ENCODE measurements at regions of chr4 and their contacts with region 1.

Region 1: DNA sequence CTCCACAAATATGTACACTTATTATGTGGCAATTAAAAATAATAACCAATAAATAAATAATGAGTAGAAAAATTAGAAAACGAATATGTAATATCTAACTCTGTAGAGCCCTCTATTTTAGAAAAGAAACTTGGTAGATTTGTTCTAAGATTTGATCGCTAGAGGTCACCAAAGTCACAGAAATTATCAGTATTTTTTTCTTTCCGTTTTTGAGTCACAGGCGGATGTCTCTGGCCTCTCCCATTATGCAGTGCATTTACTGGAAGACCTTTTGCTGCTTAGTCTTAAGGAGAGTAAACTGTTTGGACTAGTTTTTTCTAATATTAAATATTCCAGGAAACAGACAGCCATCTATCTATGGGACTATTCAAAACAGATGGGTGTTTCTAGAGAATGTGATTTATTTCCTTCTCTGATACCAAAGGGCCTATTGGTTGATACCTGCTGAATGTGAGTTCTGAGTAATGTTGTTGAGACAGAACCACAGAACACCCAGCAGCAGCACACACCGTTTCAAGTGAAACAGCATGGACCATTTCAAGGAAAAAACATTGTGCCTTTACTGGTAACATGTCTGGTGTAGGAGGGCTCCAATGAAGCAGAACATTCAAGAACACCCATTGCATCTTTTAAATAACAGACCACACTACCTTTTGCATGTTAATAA is 34.0 kb upstream of the GYPA start:
- DNase-seq: no peak

Region 2: DNA sequence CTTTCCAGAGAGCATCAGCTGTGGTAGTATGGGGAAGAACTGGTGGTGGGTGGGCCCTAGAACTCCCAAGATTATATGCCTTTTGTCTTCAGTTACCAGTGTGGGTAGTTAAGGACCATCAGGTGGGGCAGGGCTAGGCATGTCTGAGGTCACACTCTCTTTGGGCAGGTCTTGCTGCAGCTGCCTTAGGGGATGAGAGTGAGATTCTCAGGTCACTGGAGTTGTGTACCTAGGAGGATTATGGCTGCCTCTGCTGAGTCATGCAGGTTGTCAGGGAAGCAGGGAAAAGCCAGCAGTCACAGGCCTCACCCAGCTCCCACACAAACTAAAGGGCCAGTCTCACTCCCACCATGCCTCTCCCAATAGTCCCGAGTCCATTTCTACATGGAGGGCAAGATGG is 138.9 kb after region 1 on chr4:
- intact Hi-C with region 1: no loop called
- DNase-seq: no peak

Region 3: DNA sequence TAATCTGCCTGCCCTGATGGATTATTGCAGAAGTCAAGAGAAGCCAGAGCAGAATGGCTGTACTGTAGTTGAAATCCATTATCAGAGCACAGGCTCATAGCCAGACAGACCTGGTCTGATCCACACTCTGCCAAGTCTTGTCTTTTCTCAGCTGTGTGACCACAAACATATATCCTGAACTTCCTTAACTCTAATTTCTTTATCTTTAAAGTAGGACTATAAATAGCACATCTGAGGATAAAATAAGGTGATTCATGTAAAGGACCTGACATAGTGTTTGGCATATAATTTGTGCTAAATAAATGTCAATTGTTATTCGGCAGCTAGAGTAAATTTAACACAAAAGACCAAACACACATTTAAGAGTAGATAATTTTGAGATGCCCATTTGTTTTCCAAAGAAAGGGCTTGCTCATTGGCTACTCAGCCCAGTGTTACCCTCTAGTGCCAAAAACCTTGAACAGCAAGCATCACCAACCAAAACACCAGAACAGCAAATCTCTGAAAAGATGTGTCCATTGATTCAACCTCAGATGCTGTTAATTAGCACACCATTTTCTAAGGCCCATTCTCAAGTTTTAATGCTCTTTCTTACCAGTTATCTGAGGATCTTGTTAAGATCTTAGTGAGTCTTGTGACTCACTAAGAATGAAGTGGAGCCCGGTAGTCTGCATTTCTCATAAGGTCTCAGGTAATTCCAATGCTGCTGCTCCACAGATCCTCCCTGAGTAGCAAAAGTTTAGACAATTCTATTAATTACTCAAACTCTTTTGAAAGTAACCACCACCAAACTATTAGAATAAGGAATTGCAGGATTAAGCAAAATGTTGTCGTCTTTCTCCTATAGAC is 580.3 kb after region 1 on chr4:
- intact Hi-C with region 1: loop called (anchors 10 kb)
- DNase-seq: peak in 1 of 10 donors; percentile 28

Region 4: GRCh38 chr4:144787365-144788258 is 613.1 kb after region 1 on chr4:
- intact Hi-C with region 1: loop called (anchors 5 kb)
- DNase-seq: no peak

Region 5: GRCh38 chr4:145061318-145061920 is 886.9 kb after region 1 on chr4:
- intact Hi-C with region 1: loop called (anchors 5 kb)
- DNase-seq: no peak